PC-3 (cell line): ENCODE measurements at regions of chr10 and their contacts with region 1.

Region 1: GRCh38 chr10:63173468-63174232 is 40.5 kb downstream of the NRBF2 start:
- DNase-seq: no peak
- ATAC-seq: 0 out of 2 replicates have a peak, but pooled peaks have one; percentile 12
- H3K4me3 ChIP-seq: no peak overlapping the region
- H3K27ac ChIP-seq: no peak overlapping the region
- H3K4me1 ChIP-seq: no peaks in the 10 kb centered on the region
- H3K27me3 ChIP-seq: no peaks in the 10 kb centered on the region
- CTCF ChIP-seq: no peak

Region 2: DNA sequence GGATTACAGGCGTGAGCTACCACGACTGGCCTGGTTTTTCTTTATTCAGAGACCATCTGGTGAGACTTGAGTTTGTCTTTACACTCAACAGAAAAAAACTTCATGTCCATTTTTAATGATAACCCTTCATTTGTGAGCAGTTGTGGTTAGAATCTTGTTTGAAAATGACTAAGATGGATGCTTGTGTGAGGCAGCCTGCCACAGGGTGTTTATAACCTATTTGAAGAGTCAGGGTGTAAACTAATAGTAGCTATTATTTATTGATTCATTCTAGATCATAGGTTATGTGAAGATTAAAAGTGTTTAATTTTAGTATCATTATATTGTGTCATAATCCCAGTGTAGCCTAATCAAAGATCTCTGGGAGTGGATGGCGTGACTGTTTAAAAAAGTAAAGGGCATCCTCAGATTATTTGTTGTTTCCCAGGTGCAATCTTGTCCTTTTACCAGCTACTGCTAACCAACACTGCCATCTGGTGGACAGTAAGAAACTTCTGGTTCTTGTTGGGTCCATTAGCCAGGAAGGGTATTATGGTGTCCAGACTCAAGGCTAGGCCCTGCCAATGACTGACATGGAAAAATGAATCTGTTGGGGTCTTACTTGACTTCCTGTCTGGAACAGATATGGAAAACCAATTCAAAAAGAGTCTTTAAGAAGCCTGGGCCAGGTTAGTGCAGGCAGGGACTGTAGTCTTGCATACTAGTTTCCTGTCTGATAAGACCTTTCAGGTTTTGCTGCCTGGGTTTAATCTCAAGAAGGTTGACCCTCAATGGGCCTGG is 15.6 kb before region 1 on chr10:
- CTCF ChIA-PET with region 1: no interaction called
- POLR2A ChIA-PET with region 1: no interaction called
- intact Hi-C with region 1: no loop called
- DNase-seq: peak; percentile 99
- ATAC-seq: peak; percentile 80
- H3K4me3 ChIP-seq: no peak overlapping the region
- H3K27ac ChIP-seq: peak overlapping the region; percentile 17
- H3K4me1 ChIP-seq: peaks cover 7% of the 10 kb centered on the region; the same call in 1 of the 2 replicates
- H3K27me3 ChIP-seq: no peaks in the 10 kb centered on the region
- CTCF ChIP-seq: peak; percentile 100

Region 3: GRCh38 chr10:63614371-63614891 is 440.8 kb after region 1 on chr10:
- CTCF ChIA-PET with region 1: no interaction called
- POLR2A ChIA-PET with region 1: interaction called, 15 read pairs
- intact Hi-C with region 1: no loop called
- DNase-seq: no peak
- ATAC-seq: no peak
- H3K4me3 ChIP-seq: no peak overlapping the region
- H3K27ac ChIP-seq: no peak overlapping the region
- H3K4me1 ChIP-seq: peaks cover 9% of the 10 kb centered on the region
- H3K27me3 ChIP-seq: no peaks in the 10 kb centered on the region
- CTCF ChIP-seq: no peak